ENCODE measurements at regions of chr19 and their contacts with region 1.

Region 1: DNA sequence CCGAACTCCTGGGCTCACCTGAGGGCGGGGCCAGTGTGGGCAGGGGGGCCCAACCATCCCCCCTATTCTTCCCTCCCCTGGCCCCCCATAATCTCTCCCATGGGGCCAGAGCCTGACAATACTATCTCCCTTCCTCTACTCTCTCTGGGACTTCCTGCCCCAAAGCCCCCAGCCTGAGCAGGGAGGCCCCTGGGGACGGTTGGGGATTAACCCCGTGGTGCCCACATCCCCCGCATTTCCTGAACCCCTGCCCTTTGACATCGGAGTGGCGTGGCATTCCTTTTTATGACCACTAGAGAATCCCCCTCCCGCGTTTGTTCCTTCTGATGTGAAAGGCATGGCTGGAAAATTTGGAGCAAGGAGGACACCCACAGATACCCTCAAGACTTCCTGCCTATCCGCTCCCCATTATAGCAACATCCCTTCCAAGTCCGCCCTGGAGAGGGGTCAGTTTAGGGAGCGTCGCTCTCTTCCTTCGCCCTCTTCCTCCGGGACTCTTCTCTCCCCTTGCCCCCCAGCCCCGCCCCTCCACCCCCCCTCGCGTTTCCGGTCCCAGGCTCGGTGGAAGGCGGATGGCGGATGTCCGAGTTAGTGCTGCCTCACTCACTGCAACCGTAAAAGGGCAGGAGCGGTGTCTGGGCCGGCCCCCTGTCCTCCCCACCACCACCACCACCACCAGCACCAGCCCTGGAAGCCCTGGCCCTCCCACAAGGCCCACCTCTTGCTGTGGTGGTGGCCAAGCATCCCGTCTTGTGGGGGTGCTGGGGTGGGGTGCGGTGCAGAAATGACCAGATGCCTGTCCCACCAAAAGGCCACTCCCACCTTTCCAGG is 1.8 kb downstream of the VASP start:
- H3K4me3 Mint-ChIP-seq: peak overlapping the region; percentile 99
- H3K27ac Mint-ChIP-seq: peak overlapping the region; percentile 94
- H3K4me1 Mint-ChIP-seq: peaks cover 66% of the 10 kb centered on the region
- H3K27me3 Mint-ChIP-seq: no peaks in the 10 kb centered on the region

Region 2: GRCh38 chr19:45306518-45307027 is 202.5 kb before region 1 on chr19:
- intact Hi-C with region 1: no loop called
- H3K4me3 Mint-ChIP-seq: no peak overlapping the region
- H3K27ac Mint-ChIP-seq: no peak overlapping the region
- H3K4me1 Mint-ChIP-seq: peaks cover 4% of the 10 kb centered on the region
- H3K27me3 Mint-ChIP-seq: peaks cover 13% of the 10 kb centered on the region

Region 3: DNA sequence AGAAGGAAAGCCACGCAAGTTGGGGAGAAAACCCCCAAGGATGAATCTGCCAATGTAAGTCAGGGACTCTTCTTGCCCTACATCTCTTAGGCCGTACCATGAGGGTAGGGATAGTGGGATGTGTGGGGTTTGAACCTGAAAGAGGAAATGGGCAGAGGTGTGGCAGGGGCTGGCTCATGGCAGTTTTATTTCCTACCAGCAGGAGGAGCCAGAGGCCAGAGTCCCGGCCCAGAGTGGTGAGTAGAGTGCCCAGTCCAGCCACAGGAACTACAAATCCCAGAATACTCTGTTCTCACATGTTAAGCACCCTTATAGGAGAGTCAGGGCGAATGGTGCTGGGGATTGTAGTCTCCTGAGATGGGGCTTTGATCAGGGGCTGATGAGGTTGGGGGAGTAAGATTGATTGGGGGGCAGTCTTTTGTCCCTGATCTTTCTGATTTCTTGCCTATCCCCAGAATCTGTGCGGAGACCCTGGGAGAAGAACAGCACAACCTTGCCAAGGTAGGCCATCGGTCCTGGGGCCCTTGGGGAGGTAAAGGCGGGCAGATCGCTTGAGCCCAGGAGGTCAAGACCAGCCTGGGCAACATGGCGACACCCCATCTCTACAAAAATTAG is 14.7 kb after region 1 on chr19:
- intact Hi-C with region 1: loop called (anchors 2 kb)
- H3K4me3 Mint-ChIP-seq: no peak overlapping the region
- H3K27ac Mint-ChIP-seq: peak overlapping the region; percentile 47
- H3K4me1 Mint-ChIP-seq: peaks cover 76% of the 10 kb centered on the region
- H3K27me3 Mint-ChIP-seq: peaks cover 8% of the 10 kb centered on the region

Region 4: DNA sequence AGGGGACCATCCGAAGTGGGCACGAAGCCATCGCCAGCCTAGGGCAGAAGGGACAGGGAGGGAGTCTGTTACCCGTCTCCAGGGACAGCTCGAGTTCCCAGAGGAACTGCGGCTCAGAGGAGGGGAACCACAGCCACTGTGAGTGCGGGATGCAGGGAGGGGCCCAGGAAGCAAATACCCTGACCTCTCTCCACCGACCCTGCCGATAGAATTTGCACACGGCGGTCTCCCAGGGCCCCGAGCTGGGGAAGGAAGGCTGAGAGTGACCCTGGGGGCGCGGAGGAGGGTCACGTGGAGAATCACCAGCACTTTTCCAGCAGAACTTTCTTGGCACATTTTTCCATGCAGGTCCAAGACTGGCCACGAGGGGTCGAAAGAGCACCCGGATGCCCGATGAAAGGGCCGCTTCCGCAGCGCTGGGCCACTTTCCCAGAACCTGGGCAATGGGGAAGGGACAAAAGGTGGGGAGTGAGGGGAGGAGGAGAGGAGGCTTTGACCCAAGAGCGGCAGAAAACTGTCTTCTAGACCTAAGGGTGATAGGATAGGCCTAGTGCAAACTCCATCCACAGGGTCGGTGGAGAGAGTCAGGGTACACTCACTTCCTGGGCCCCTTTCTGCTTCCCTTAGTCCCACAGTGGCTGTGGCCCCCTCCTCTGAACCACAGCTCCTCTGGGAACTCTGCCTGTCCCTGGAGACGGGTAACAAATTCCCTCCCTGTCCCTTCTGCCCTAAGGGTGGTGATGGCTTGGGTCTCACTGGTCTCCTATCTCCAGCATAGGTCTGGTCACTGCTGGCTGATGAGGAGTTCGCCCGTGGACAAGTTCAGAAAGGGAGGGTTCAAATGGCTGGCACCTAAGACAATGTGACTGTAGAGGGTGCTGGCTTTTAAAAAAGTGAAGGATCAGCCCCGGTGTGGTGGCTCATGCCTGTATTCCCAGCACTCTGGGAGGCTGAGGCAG is 98.3 kb after region 1 on chr19:
- intact Hi-C with region 1: no loop called
- H3K4me3 Mint-ChIP-seq: no peak overlapping the region
- H3K27ac Mint-ChIP-seq: peak overlapping the region; percentile 33
- H3K4me1 Mint-ChIP-seq: peaks cover 10% of the 10 kb centered on the region
- H3K27me3 Mint-ChIP-seq: peaks cover 23% of the 10 kb centered on the region